Mammary epithelial cell (primary cell): ENCODE measurements at regions of chr18 and their contacts with region 1.

Region 1: DNA sequence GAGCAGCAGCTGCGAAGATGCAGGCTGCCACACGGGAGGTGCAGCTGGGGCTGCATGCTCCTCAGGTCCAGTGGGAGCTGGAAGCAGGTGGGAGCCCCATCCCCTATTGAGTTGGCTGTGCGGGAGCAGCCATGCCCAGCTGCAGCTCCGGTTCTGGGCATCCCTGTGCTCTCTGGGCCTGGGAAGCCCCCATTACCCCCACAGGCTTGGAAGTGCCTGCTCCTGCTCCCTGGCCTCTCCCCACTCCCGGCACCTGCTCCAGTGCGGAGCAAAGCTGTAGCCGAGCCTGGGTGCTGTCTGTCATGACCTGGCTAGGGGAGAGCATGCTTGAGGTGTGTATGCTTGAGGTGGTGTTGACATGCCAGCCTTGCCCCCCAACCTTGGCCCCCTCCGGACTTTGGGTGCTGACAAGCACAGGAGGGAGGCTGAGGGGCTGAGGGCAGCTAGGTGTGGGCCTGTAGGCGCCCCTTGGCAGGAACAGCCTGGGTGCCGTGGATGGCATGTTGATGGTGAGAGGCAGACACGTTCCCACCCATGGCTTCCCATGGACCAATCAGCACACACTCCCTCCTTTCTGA is 21.5 kb downstream of the ANKRD29 start:
- DNase-seq: no peak
- H3K4me3 ChIP-seq: no peak overlapping the region
- H3K27ac ChIP-seq: no peak overlapping the region
- H3K4me1 ChIP-seq: peaks cover under 1% of the 10 kb centered on the region
- H3K27me3 ChIP-seq: no peaks in the 10 kb centered on the region
- CTCF ChIP-seq: no peak

Region 2: GRCh38 chr18:23662309-23663263 is 21.4 kb after region 1 on chr18 and contains the start of gene ANKRD29:
- CTCF ChIA-PET with region 1: interaction called, 15 read pairs
- dilution Hi-C with region 1: no loop called
- in situ Hi-C with region 1: no loop called
- intact Hi-C with region 1: no loop called
- DNase-seq: peak; percentile 21
- H3K4me3 ChIP-seq: peak within 1 kb of the TSS; percentile 45 to 62 (median 55)
- H3K27ac ChIP-seq: no peak within 1 kb of the TSS
- H3K4me1 ChIP-seq: peaks cover 14% of the 10 kb centered on the region
- H3K27me3 ChIP-seq: no peaks in the 10 kb centered on the region
- CTCF ChIP-seq: no peak
- total RNA-seq, gene ANKRD29: 7.5 to 8.7 TPM